ENCODE measurements at regions of chr7 and their contacts with region 1.

Region 1: DNA sequence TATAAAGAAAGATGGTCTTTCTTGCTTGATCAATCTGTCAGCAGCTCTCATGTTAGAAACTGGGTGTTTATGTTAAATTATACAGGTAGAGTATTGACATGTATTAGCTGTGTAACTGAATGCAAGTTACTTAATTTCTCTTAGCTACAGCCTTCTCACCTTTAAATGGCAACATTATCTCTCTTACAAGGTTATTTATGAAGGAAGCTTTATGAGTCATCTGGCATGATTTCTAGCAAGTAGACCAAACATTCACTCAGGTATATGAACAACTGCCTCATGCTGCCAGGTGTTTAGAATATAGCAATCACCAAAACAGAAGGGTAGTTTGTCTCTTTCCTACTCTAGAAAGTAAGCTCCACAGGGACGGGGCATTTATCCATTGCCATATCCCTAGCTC is 8.5 kb downstream of the ARL4A start:
- DNase-seq: no peak
- H3K4me3 ChIP-seq: no peak overlapping the region
- H3K27ac ChIP-seq: peak overlapping the region in 1 of 4 donors; percentile 7
- H3K4me1 ChIP-seq: peaks cover 0 to 16% (median 3%) of the 10 kb centered on the region in 4 donors
- H3K27me3 ChIP-seq: no peaks in the 10 kb centered on the region
- CTCF ChIP-seq: no peak
- EP300 ChIP-seq: no peak
- POLR2A ChIP-seq: no peak

Region 2: GRCh38 chr7:12434009-12434642 is 261.8 kb before region 1 on chr7:
- in situ Hi-C with region 1: no loop called
- intact Hi-C with region 1: no loop called
- DNase-seq: no peak
- H3K4me3 ChIP-seq: no peak overlapping the region
- H3K27ac ChIP-seq: no peak overlapping the region
- H3K4me1 ChIP-seq: no peaks in the 10 kb centered on the region
- H3K27me3 ChIP-seq: no peaks in the 10 kb centered on the region
- CTCF ChIP-seq: no peak
- EP300 ChIP-seq: no peak
- POLR2A ChIP-seq: no peak

Region 3: DNA sequence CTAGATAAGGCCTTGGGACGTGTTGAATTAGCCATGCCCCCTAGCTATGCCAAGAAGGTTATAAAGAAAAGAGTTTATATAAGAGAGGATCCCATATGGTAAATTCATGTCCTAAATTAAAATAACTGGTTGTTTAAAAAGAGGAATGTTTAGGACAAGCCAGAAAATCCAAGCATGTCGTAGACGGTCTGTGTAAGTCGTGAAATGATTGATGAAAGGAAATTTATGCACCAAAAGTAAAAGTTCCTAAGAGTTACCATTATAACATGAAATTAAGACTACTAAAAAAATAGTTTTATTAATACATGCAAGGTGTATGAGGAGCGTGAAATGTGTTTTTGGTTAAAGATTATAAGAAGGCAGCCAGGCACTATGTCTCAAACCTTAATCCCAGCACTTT is 616.4 kb after region 1 on chr7:
- in situ Hi-C with region 1: no loop called
- intact Hi-C with region 1: loop called (anchors 5 kb)
- DNase-seq: no peak
- H3K4me3 ChIP-seq: no peak overlapping the region
- H3K27ac ChIP-seq: no peak overlapping the region
- H3K4me1 ChIP-seq: no peaks in the 10 kb centered on the region
- H3K27me3 ChIP-seq: no peaks in the 10 kb centered on the region
- CTCF ChIP-seq: no peak
- EP300 ChIP-seq: no peak
- POLR2A ChIP-seq: no peak